Dorsolateral prefrontal cortex (tissue), 120 donors: ENCODE measurements at regions of chr10 and their contacts with region 1.

Region 1: GRCh38 chr10:122571892-122572291 is 11.3 kb downstream of the DMBT1 start:
- DNase-seq: peak in 6 of 10 donors; percentile 21 to 71 (median 56)
- H3K4me3 ChIP-seq: no peak overlapping the region
- H3K27ac ChIP-seq: peak overlapping the region in 22 of 59 donors; percentile 22 to 81 (median 65)
- H3K27me3 ChIP-seq: no peaks in the 10 kb centered on the region
- CTCF ChIP-seq: no peak

Region 2: GRCh38 chr10:122221958-122222357 is 349.9 kb before region 1 on chr10:
- intact Hi-C with region 1: no loop called
- DNase-seq: no peak
- H3K4me3 ChIP-seq: no peak overlapping the region
- H3K27ac ChIP-seq: no peak overlapping the region
- H3K27me3 ChIP-seq: no peaks in the 10 kb centered on the region
- CTCF ChIP-seq: no peak

Region 3: DNA sequence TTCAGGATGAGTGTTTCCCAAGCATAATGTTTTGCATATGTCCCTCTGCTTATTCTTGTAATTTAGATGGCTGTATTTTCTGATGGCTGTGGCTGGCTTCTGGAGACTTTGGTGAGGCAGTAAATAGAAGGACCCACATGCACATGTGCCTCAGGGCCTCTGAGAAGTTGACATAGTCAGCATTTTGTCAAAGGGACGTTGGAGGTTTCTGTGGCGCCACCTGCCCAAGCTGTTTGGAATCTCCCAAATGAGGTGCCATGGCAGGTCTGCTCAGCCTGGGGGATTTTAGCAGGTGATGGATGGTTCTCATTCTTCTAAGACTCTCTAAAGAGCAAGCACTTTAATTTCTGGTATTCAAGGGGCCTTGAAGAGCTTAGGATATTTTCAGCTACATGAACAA is 98.0 kb after region 1 on chr10:
- intact Hi-C with region 1: loop called in 1 of 2 experiments (anchors 10 kb)
- DNase-seq: no peak
- H3K4me3 ChIP-seq: no peak overlapping the region
- H3K27ac ChIP-seq: no peak overlapping the region
- H3K27me3 ChIP-seq: peaks cover 0 to 9% (median 0%) of the 10 kb centered on the region in 45 donors
- CTCF ChIP-seq: no peak